ENCODE measurements at regions of chr18 and their contacts with region 1.

Region 1: DNA sequence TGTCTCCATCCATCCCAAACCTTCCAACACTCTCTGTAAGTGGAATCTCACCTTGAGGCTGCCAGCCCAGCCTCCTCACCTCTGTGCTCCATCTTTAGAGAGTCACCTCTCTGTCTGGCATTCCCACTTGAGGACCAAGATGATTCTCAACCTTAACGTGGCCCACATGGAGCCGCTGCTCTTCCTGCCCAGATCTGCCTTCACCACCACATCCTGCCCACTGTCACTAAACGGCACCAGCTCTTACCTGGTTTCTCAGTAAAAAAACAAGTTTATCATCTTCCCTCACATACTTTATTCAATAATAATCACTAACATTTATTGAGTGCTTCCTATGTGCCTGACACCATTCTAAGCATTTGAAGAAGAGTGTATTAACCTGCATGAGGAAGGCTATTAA is 80.4 kb downstream of the NEDD4L start:
- DNase-seq: no peak
- H3K4me3 Mint-ChIP-seq: no peak overlapping the region
- H3K27ac Mint-ChIP-seq: no peak overlapping the region
- H3K4me1 Mint-ChIP-seq: peaks cover 3% of the 10 kb centered on the region
- H3K27me3 Mint-ChIP-seq: peaks cover 2% of the 10 kb centered on the region

Region 2: DNA sequence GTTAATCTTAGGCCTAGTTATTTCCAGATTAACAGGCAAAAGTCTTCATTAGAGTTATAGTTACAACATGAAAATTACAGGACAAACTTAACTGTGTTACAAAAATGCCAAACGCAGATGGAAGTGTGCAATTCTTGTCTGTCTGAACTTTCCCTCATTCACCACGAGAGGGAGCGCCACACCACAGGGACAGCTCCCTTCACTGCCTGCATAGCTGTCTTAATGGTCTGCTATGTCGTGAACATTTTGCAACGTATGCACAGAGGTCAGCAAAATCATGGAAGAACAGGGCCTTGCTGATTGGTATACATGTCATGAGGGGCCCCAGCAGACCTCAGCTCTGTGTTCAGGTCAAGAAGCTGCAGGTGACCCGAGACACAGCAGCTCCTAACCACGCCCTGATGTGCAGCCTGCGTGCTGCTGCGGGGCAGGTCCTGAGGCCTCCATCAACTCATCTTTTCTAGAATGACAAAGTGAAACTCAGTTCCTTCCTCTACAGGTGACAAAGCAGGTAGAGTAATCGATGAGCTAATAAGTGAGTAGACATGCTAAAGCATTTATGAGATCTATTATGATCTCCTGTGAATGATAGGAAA is 242.6 kb before region 1 on chr18:
- intact Hi-C with region 1: loop called (anchors 5 kb)
- DNase-seq: peak; percentile 82
- H3K4me3 Mint-ChIP-seq: no peak overlapping the region
- H3K27ac Mint-ChIP-seq: no peak overlapping the region
- H3K4me1 Mint-ChIP-seq: no peaks in the 10 kb centered on the region
- H3K27me3 Mint-ChIP-seq: peaks cover 2% of the 10 kb centered on the region

Region 3: DNA sequence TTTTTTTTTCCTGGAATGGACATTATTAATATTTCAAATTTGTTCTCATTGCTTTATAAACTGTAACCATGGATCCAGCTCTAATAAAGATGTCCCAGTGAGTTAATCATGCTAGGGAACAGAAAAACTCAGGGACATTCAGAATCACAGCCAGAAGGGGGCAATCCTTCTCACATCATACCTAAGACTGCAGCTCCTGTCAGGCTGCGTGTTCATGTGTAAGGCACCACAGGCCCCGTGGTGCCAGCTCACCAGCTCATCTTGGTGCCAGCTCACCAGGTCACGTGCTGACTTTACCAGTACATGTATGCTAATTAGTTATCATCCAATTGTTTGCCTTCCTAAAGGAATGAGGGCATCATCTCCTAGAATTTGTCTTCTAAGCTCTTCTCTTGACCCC is 165.2 kb before region 1 on chr18:
- intact Hi-C with region 1: loop called (anchors 5 kb)
- DNase-seq: no peak
- H3K4me3 Mint-ChIP-seq: no peak overlapping the region
- H3K27ac Mint-ChIP-seq: no peak overlapping the region
- H3K4me1 Mint-ChIP-seq: no peaks in the 10 kb centered on the region
- H3K27me3 Mint-ChIP-seq: peaks cover 22% of the 10 kb centered on the region

Region 4: DNA sequence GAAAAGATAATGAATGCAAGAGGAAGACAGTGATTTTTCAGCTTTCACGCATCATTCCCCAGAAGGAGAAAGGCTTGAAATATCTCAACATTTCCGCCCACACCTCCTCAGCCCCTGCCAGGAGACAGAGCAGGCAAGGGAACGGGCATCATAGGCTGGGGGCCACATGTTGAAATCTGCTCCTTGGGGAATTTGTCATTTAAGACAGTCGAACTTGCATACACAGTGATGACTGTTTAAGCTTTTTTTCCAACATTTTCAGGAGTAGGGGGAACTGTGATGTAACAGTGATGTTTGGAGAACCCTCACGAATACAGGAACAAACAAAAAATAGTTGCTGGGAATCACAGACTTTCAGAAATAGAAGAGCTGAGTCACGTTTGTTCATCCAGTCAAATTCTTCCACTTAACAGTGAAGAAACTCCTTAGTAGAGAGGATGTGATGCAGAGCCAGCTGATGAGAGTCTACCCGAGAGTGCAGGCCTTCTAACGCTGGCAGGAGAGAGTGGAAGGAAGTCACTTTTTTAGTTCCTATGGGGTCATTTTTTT is 237.6 kb after region 1 on chr18:
- intact Hi-C with region 1: no loop called
- DNase-seq: no peak
- H3K4me3 Mint-ChIP-seq: no peak overlapping the region
- H3K27ac Mint-ChIP-seq: no peak overlapping the region
- H3K4me1 Mint-ChIP-seq: no peaks in the 10 kb centered on the region
- H3K27me3 Mint-ChIP-seq: peaks cover 9% of the 10 kb centered on the region